Activated CD4-positive, alpha-beta T cell treated with anti-CD3 and anti-CD28 coated beads, Interleukin-2, amount 10 ng/mL, durations not matched to agents 7 days and 5 days (primary cell): ENCODE measurements at regions of chr1 and their contacts with region 1.

Region 1: DNA sequence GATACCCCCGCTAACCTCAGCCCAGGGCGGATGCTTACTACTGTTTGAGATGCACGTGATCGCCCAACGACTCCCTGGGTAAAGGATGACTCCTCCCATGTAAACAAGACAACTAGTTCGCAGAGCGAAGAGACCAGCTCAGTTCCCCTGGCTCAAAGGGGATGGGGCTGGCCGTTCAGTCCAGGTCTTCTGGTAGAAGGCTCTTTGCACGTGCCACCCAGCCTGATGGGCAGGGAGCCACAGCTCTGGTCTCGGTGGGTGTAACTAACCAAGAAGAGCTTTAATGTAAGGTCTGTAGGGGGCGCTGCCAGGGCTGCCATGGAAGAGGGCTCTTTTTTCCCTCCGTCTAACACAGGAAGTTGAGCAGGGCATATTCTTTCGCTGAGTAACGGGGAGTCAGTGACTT is 49.4 kb upstream of the PARP1 start:
- DNase-seq: peak; percentile 55
- H3K4me3 Mint-ChIP-seq: peak overlapping the region; percentile 65
- H3K27ac Mint-ChIP-seq: peak overlapping the region; percentile 89
- H3K4me1 Mint-ChIP-seq: peaks cover 19% of the 10 kb centered on the region
- H3K27me3 Mint-ChIP-seq: peaks cover 2% of the 10 kb centered on the region

Region 2: GRCh38 chr1:226444901-226445300 is 12.4 kb before region 1 on chr1:
- CTCF ChIA-PET with region 1: interaction called, 14 read pairs
- POLR2A ChIA-PET with region 1: no interaction called
- DNase-seq: peak; percentile 88
- H3K4me3 Mint-ChIP-seq: peak overlapping the region; percentile 6
- H3K27ac Mint-ChIP-seq: peak overlapping the region; percentile 85
- H3K4me1 Mint-ChIP-seq: peaks cover 36% of the 10 kb centered on the region
- H3K27me3 Mint-ChIP-seq: peaks cover 25% of the 10 kb centered on the region